Mammary epithelial cell (primary cell): ENCODE measurements at regions of chr4 and their contacts with region 1.

Region 1: DNA sequence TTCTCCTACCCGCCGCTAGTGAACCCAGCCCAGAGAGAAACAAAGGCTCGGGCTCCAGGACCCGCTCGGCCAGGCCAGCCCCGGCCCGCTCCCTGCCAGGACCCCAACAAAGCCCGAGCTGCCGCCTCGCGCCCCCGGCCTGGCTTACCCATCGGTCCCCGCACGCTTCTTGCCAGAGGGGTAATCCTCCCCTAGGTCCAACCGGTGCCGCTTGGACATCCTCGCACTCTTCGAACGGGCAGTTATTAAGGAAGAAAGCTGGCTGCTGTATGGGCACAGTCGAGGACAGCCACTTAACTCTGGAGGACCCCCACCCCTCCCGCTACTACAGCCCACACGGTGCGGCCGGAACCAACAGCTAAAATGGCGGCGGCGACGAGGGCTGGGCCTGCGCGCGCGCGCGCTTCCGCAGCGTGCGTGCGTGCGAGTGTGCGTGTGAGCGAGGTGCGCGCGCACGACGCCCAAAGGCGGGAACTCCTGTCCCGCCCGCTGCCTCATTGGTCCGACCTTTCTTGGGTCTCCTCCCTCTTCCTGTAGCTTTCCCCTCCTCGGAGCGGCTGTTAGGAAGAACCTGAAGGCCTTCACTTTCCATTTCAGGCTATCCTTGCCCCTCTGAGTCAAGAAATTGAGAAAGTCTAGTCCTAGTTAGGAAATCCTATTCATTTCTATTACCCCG is at the start of gene DHX15:
- DNase-seq: peak; percentile 96
- H3K4me3 ChIP-seq: peak within 1 kb of the TSS; percentile 59 to 92 (median 74)
- H3K27ac ChIP-seq: peak within 1 kb of the TSS; percentile 96
- H3K4me1 ChIP-seq: no peaks in the 10 kb centered on the region
- H3K27me3 ChIP-seq: no peaks in the 10 kb centered on the region
- CTCF ChIP-seq: peak in 1 of 2 donors; percentile 1
- total RNA-seq, gene DHX15: 113 to 135 TPM

Region 2: GRCh38 chr4:24372881-24373280 is 211.4 kb before region 1 on chr4:
- CTCF ChIA-PET with region 1: no interaction called
- dilution Hi-C with region 1: no loop called
- in situ Hi-C with region 1: no loop called
- intact Hi-C with region 1: no loop called
- DNase-seq: no peak
- H3K4me3 ChIP-seq: no peak overlapping the region
- H3K27ac ChIP-seq: no peak overlapping the region
- H3K4me1 ChIP-seq: no peaks in the 10 kb centered on the region
- H3K27me3 ChIP-seq: peaks cover 3% of the 10 kb centered on the region
- CTCF ChIP-seq: no peak

Region 3: DNA sequence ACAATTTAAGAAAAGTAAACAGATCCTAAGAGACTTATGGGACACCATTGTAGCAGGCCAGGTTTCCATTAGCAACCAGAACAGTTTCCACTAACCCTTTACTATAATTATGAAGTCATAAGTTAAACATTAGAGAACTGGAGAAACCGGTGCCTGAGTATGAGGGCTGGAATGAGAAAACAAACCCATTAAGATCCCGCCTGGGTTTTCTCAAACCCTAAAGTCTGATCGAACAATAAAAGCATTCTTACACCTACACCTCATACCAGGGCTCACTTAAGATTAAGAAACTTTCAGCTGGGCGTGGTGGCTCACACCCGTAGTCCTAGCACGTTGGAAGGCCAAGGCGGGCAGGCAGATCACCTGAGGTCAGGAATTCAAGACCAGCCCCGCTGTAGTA is 13.7 kb after region 1 on chr4:
- CTCF ChIA-PET with region 1: no interaction called
- dilution Hi-C with region 1: no loop called
- in situ Hi-C with region 1: no loop called
- intact Hi-C with region 1: loop called (anchors 1 kb)
- DNase-seq: peak; percentile 97
- H3K4me3 ChIP-seq: no peak overlapping the region
- H3K27ac ChIP-seq: peak overlapping the region; percentile 98
- H3K4me1 ChIP-seq: peaks cover 34% of the 10 kb centered on the region
- H3K27me3 ChIP-seq: no peaks in the 10 kb centered on the region
- CTCF ChIP-seq: no peak

Region 4: GRCh38 chr4:24657768-24658617 is 73.7 kb after region 1 on chr4:
- CTCF ChIA-PET with region 1: no interaction called
- dilution Hi-C with region 1: no loop called
- in situ Hi-C with region 1: no loop called
- intact Hi-C with region 1: loop called (anchors 5 kb)
- DNase-seq: peak; percentile 99
- H3K4me3 ChIP-seq: no peak overlapping the region
- H3K27ac ChIP-seq: no peak overlapping the region
- H3K4me1 ChIP-seq: peaks cover 5% of the 10 kb centered on the region
- H3K27me3 ChIP-seq: peaks cover 31% of the 10 kb centered on the region
- CTCF ChIP-seq: no peak

Region 5: DNA sequence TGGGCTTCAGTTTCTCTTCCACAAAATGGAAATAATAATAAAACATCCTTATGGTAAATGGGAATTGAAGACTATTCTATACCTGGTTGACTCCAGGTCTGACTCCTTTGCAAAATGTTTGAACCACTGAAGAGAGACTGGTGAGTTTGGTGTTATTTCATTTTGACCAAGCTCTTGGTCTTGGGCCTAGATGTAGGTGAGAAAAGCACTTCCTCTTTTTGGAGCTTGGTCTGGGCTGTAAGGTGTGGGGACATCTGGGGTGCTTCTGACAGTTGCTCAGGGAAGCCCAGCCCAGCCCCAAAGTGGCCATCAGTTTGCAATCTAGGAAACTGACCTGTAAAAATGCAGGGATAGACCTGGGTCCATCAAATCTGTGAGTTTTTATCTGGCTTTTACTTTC is 184.3 kb after region 1 on chr4:
- CTCF ChIA-PET with region 1: no interaction called
- dilution Hi-C with region 1: no loop called
- in situ Hi-C with region 1: no loop called
- intact Hi-C with region 1: loop called (anchors 10 kb)
- DNase-seq: no peak
- H3K4me3 ChIP-seq: no peak overlapping the region
- H3K27ac ChIP-seq: no peak overlapping the region
- H3K4me1 ChIP-seq: peaks cover 43% of the 10 kb centered on the region
- H3K27me3 ChIP-seq: no peaks in the 10 kb centered on the region
- CTCF ChIP-seq: no peak

Region 6: DNA sequence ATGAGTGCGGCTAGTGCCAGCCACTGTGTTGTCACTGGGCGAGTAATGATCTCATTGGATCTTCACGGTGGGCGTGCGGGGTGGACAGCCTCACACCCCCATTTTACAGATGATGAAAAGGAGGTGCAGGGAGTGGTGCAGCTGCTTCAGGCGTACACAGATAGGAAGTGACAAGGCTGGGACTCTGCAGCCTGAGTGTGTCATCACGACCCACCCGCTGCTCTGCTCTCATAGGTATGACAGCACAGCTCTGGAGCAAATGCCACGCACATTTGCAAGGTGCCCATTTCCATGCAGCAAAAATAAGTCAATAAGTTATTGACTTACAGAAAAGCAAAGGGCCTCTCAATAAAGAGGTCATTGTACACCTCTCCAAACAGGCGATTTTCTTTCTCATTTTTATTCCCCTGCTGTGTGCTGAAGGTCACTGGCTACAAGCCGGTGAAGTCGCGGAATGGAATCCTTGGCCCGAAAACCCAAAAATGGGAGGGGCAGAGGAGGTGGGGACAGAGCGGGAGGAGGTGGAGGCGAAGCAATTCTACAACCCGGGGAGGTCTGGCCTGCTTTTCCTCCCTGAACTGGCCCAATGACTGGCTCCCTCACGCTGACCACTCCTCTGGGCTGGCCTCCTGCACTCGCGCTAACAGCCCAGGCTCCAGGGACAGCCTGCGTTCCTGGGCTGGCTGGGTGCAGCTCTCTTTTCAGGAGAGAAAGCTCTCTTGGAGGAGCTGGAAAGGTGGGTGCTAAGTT is 210.8 kb after region 1 on chr4 and contains the start of gene SOD3:
- CTCF ChIA-PET with region 1: no interaction called
- dilution Hi-C with region 1: no loop called
- in situ Hi-C with region 1: no loop called
- intact Hi-C with region 1: loop called (anchors 1 kb)
- DNase-seq: no peak
- H3K4me3 ChIP-seq: no peak within 1 kb of the TSS
- H3K27ac ChIP-seq: no peak within 1 kb of the TSS
- H3K4me1 ChIP-seq: no peaks in the 10 kb centered on the region
- H3K27me3 ChIP-seq: peaks cover 8% of the 10 kb centered on the region
- CTCF ChIP-seq: no peak
- total RNA-seq, gene SOD3: 0.17 TPM in 1 of 2 donors, not detected in the other

Region 7: DNA sequence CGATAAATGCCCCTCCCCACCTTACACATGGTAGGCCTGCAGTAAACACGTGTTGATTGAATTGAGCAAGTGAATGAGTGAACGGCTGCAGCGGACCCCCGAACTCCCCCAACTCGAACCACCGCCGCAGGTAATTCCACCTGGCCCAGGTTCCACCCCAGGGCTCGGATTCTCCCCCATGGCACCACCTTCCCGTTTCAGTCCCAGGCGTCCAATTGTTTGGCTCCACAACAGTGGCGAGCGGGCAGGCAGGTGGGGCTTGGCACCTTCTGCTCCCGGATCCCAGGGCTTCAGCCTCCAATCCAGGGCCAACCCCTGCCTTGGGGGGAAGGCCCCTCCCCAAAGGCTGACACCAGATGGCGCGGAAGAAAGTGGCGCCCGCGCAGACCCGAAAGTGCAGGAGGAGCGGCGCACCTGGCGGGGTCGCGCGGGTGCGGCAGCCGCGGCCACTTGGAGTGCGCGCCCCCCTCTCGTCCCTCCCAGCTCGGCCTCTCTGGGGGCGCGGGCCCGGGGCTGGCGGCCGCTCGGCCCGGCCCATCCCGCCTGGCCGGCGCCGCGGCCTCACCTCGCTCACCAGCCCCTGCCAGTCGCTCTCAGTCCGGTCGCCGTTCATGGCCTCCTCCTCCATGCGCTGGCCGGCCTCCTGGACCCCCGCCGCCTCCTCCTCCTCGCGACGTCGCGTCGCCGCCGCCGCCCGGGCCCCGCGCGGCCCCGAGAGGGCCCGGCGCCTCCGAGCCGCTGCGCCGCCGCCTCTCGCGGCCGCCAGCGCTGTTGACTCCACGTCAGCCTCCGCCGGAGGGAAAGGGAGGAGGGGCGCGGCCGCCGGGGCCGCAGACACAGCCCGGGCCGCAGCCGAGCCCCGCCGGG is 328.2 kb after region 1 on chr4 and contains the start of gene CCDC149:
- CTCF ChIA-PET with region 1: no interaction called
- dilution Hi-C with region 1: no loop called
- in situ Hi-C with region 1: no loop called
- intact Hi-C with region 1: loop called (anchors 10 kb)
- DNase-seq: peak; percentile 61
- H3K4me3 ChIP-seq: peak within 1 kb of the TSS; percentile 47 to 56 (median 52)
- H3K27ac ChIP-seq: no peak within 1 kb of the TSS
- H3K4me1 ChIP-seq: peaks cover 4% of the 10 kb centered on the region
- H3K27me3 ChIP-seq: no peaks in the 10 kb centered on the region
- CTCF ChIP-seq: peak in 1 of 2 donors; percentile 8
- total RNA-seq, gene CCDC149: 4.8 to 7.7 TPM